RWPE1 (cell line): ENCODE measurements at regions of chr10 and their contacts with region 1.

Region 1: DNA sequence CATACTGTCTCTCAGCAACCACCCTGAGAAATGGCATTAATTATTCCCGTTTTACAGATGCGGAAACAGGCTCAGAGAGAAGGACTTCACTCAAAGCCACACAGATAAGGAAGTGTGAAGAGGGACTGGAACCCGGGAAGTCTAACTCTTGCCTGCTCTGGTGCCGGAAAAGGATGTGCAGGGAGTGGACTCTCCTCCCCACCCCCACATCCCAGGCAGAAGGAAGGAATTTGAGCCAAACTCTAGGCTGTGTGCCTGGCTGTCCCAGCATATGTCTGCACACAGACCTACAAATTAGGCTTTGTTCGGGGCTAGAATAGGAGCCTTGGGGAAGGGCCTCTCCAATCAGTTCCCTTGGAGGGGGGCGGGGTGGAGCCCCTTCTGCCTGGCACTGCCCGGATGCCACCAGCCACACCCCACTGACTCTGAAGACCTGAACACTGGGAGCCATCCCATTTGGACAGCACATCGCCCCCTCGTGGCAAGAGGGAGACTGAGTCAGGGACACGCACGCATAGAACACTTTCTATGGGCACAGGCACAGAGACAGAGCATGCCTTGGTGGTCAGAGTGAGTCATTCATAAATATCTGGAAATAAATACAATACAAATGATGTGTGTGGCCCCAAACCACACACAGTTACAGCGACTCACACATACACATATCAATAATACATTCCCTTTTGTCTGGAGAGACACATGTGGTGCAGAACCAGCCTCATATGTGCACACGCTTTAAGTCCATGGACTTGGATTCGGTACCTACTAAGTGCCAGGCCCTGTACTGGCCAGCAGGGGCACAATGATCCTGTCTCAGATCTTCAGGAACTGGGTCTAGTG is 13.1 kb downstream of the LZTS2 start:
- DNase-seq: peak; percentile 94
- H3K27ac ChIP-seq: peak overlapping the region; percentile 54
- CTCF ChIP-seq: peak; percentile 87

Region 2: DNA sequence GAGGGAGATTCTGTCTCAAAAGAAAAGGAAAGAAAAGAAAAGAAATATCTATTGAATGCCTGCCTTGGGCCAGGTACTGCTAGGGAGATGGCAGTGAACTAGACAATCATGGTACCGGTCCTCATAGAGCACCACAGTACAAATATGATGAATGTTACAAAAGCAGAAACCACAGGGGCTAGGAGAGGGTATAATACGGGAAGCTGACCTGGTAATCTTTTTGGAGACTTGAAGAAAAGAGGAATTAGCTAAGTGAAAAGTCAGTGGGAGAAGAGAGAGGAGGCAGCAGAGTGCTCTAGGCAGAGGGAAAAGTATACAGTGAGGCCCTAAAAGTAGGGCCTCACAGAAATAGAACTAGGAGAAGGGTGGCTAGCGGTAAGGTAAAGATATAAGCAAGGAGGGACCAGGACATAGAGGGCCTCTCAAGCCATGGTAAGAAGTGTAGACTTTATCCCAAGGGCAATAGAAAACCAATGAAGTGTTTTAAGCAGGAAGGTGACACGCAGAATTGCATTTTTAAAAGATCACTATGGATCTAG is 592.8 kb before region 1 on chr10:
- CTCF ChIA-PET with region 1: no interaction called
- POLR2A ChIA-PET with region 1: no interaction called
- DNase-seq: no peak
- H3K27ac ChIP-seq: no peak overlapping the region
- CTCF ChIP-seq: no peak

Region 3: GRCh38 chr10:100993986-100994708 is 18.6 kb before region 1 on chr10:
- CTCF ChIA-PET with region 1: interaction called, 57 read pairs
- POLR2A ChIA-PET with region 1: interaction called, 4 read pairs
- DNase-seq: no peak
- H3K27ac ChIP-seq: peak overlapping the region; percentile 99
- CTCF ChIP-seq: peak; percentile 75

Region 4: DNA sequence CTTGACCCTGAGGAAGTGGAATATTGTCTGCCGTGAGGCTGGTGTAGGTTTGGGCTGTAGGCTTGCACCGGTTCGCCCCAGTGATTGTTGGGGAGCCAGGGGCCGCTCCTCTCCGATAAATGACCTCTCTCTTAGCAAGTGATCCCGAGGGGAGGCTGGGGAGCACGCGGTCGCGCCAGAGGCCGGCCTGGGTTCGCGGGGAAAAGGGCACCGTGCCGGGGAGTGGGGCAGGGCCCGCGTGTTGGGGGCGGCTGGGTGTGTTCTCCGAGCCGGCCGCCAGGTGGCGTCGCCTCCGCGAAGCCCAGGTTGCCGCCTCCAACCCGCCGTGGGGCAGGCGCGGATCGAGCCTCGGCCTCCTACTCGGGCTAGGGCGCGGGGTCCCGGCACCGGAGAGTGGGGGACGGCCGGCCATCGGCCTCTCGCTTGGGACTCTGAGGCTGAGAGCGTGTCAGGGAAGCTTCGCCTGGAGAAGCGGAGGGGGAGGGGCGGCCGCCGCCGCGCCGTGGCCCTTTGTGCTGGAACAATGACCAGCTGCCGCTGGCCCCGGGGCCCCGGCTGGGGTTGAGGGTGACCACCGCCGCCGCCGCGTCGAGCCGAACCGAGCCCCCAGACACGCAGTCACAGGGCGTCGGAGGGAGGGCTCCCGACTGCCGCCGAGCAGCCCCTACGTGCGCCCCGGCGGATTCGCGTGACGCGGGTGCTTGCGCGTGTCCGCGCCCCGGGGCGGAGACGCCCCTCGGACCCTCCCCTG is 13.6 kb before region 1 on chr10:
- CTCF ChIA-PET with region 1: interaction called, 57 read pairs
- POLR2A ChIA-PET with region 1: interaction called, 3 read pairs
- DNase-seq: peak; percentile 83
- H3K27ac ChIP-seq: peak overlapping the region; percentile 99
- CTCF ChIP-seq: peak; percentile 92

Region 5: DNA sequence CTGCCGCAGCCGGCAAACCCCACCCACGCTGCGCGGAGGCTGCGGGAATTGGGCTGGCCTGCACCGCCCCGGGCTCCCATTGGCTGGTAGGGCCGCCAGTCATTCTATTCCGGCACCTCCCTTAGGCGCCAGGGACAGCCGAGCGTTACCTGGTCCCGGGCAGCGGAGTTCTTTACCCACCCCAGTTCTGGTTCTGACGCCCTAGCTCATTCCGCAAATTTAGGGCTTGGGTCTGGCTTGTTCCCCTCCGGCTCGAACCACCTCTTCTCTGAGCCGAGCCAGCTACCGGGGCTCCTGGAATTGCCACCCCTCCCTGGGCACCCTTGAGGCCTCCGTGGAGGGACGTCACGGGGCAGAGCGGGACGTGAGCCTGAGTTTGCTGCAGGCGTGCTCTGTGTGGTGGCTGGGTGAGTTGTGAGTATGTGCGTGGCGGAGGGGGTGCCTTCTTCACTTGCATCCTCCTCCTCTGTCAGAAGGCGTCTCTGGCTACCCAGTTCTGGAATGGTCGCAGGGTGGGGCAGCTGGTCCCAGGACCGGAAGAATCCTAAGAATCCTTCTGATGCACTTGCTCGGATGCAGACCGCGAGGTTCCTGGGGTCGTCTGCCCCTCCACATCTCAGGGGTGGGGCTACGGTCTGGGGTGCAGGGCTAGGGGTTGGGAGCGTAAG is 18.5 kb after region 1 on chr10 and contains the starts of genes PDZD7 and SFXN3:
- CTCF ChIA-PET with region 1: interaction called, 11 read pairs
- POLR2A ChIA-PET with region 1: no interaction called
- DNase-seq: peak; percentile 99
- H3K27ac ChIP-seq: peak within 1 kb of the TSS; percentile 99
- CTCF ChIP-seq: no peak